ENCODE measurements at regions of chr13 and their contacts with region 1.

Region 1: DNA sequence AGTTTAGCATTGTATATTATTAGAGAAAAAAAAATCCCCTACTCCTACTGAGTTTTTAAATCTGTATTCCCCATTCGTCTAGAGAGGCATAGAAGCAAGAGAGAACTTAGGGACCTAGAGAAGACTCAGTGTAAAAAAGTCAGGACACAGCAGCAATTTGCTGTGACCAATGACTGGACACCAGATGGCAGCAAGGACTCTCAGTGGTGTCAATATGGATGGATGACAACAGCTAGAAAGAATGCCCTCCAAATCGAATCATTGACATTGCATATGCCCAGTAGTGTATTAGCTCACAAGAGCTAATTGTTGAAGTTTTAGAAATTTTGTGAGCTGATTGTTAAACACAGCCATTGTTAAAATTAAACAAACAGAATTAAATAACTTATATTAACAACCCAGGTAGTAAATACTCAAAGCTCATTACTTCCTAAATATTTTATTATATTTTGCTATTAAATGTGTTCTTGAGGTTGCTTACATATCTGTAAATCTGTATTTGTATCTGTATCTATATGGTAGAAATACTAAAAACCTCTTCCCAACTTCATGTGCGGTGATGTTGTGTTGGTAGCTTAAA is 43.9 kb downstream of the SIAH3 start:
- DNase-seq: peak; percentile 65
- H3K4me3 ChIP-seq: no peak overlapping the region
- H3K27ac ChIP-seq: no peak overlapping the region
- H3K4me1 ChIP-seq: peaks cover 7 to 15% of the 10 kb centered on the region in 2 experiments; a peak in 3 of 4 replicates
- H3K27me3 ChIP-seq: no peaks in the 10 kb centered on the region
- CTCF ChIP-seq: peak; percentile 64
- EP300 ChIP-seq: no peak
- RAD21 ChIP-seq: peak; percentile 91

Region 2: GRCh38 chr13:45607931-45608330 is 199.7 kb before region 1 on chr13:
- CTCF ChIA-PET with region 1: no interaction called
- POLR2A ChIA-PET with region 1: no interaction called
- DNase-seq: no peak
- H3K4me3 ChIP-seq: no peak overlapping the region
- H3K27ac ChIP-seq: no peak overlapping the region
- H3K4me1 ChIP-seq: no peaks in the 10 kb centered on the region
- H3K27me3 ChIP-seq: no peaks in the 10 kb centered on the region
- CTCF ChIP-seq: no peak
- EP300 ChIP-seq: no peak
- RAD21 ChIP-seq: no peak

Region 3: GRCh38 chr13:45623515-45624090 is 184.0 kb before region 1 on chr13:
- CTCF ChIA-PET with region 1: interaction called, 12 read pairs
- POLR2A ChIA-PET with region 1: no interaction called
- DNase-seq: peak; percentile 39
- H3K4me3 ChIP-seq: no peak overlapping the region; a peak in 1 of 4 replicates
- H3K27ac ChIP-seq: no peak overlapping the region
- H3K4me1 ChIP-seq: peaks cover 0 to 5% of the 10 kb centered on the region in 2 experiments; a peak in 2 of 4 replicates
- H3K27me3 ChIP-seq: no peaks in the 10 kb centered on the region
- CTCF ChIP-seq: peak; percentile 69
- EP300 ChIP-seq: no peak
- RAD21 ChIP-seq: peak; percentile 71

Region 4: DNA sequence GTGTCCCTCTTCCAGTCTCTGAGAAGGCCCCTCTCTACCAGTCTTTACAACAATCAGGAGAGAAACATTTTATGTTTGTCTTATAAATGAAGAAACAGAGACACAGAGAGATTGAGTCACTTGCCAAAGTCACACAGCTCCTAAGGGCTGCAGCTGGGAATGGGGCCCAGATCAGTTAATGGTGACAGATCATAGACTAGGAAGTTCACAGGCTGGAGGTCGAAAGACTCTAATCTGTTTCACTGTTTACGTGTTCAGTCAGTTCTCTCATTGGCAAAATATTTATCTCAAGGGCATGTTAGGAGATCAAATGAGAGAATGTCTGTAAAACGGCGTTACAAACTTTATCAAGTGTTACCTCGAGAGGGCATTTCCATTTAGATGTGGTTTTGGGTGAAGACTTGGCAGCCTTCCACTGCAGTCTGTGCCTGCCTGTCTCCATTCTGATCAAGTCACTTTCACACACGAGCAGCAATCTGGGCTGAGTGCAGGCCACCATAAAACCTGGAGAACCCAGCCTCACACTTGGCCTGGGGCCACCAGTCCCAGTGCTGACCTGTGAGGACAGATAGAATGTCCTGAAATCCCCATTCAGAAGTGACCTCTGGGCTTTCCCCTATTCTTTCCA is 21.2 kb before region 1 on chr13:
- CTCF ChIA-PET with region 1: interaction called, 10 read pairs
- POLR2A ChIA-PET with region 1: no interaction called
- DNase-seq: peak; percentile 34
- H3K4me3 ChIP-seq: no peak overlapping the region
- H3K27ac ChIP-seq: peak overlapping the region in 1 of 2 experiments; percentile 47; a peak in 2 of 4 replicates
- H3K4me1 ChIP-seq: peaks cover 4 to 58% of the 10 kb centered on the region in 2 experiments; a peak in 3 of 4 replicates
- H3K27me3 ChIP-seq: no peaks in the 10 kb centered on the region; the same call in 1 of the 2 replicates
- CTCF ChIP-seq: no peak
- EP300 ChIP-seq: no peak
- RAD21 ChIP-seq: no peak

Region 5: DNA sequence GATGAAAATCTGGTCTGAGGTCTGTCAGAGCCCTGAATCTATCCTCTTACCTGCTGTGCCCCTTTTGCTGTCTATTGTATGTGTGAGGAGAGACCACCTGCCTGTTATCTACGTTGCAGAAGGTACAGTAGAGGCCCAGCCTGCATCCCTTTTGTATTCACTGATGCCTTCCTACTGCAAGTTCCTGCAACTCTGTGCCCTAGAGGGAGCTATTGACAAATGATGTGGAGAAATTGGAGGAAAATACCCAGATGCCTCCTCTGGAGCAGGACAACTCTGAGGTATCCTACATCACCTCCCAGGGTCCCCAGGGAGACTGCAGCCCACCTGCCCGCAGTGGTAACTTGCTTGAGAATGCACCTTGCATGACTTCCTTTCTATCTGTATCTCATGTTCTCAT is 10.2 kb after region 1 on chr13:
- CTCF ChIA-PET with region 1: interaction called, 15 read pairs
- POLR2A ChIA-PET with region 1: no interaction called
- DNase-seq: no peak
- H3K4me3 ChIP-seq: no peak overlapping the region
- H3K27ac ChIP-seq: no peak overlapping the region
- H3K4me1 ChIP-seq: peaks cover 0 to 4% of the 10 kb centered on the region in 2 experiments; a peak in 1 of 4 replicates
- H3K27me3 ChIP-seq: no peaks in the 10 kb centered on the region; the same call in 1 of the 2 replicates
- CTCF ChIP-seq: no peak; the same call in 1 of the 2 replicates
- EP300 ChIP-seq: no peak
- RAD21 ChIP-seq: peak; percentile 34; the same call in 1 of the 2 replicates

Region 6: GRCh38 chr13:46010148-46010547 is 202.5 kb after region 1 on chr13:
- CTCF ChIA-PET with region 1: interaction called, 18 read pairs
- POLR2A ChIA-PET with region 1: no interaction called
- DNase-seq: peak; percentile 12
- H3K4me3 ChIP-seq: no peak overlapping the region; a peak in 1 of 4 replicates
- H3K27ac ChIP-seq: no peak overlapping the region
- H3K4me1 ChIP-seq: peaks cover 0 to 6% of the 10 kb centered on the region in 2 experiments; a peak in 1 of 4 replicates
- H3K27me3 ChIP-seq: no peaks in the 10 kb centered on the region
- CTCF ChIP-seq: peak; percentile 59
- EP300 ChIP-seq: no peak
- RAD21 ChIP-seq: peak; percentile 53

Region 7: DNA sequence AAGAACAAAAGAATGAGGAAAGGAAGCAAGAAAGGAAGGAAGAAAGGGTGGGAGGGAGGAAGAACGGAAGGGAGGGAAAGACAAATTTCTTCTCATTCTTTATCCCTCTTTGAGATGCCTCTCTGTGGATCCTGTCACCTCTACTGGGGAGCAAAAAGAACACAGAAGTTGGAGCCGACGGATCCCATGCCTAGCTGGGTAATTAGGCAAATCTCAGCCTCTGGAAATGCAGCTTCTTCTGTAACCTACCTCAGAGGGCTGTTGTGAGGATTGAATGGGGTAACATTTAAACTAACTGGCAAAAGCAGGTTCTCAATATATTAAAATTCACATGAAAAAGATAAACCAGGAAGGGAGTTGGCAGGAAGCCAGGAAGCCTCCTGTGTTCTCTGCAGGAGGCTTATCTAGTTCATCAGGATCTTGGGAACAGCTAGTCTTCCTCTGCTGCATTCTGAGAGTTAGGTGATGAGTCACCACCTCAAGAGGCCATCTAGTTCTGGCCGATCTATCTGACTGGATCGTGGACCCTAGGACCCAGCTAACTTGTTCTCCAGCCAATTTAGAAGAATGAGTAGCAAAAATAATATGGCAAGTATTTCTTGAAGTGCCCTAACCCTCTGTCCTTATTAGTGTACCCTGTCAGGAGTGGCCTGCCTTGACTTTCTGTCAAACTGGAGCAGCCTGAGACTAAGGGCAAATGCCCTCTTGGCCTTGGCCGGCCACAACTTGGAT is 312.4 kb after region 1 on chr13:
- CTCF ChIA-PET with region 1: interaction called, 57 read pairs
- POLR2A ChIA-PET with region 1: no interaction called
- DNase-seq: no peak
- H3K4me3 ChIP-seq: no peak overlapping the region
- H3K27ac ChIP-seq: no peak overlapping the region
- H3K4me1 ChIP-seq: peaks cover 0 to 31% of the 10 kb centered on the region in 2 experiments; a peak in 3 of 4 replicates
- H3K27me3 ChIP-seq: no peaks in the 10 kb centered on the region
- CTCF ChIP-seq: no peak
- EP300 ChIP-seq: no peak
- RAD21 ChIP-seq: no peak

Measured in SK-N-SH (cell line).